Activated B cell treated with CpG ODN at 0.5 μM for 24 hours (primary cell): ENCODE measurements at regions of chr3 and their contacts with region 1.

Region 1: GRCh38 chr3:67171841-67172240 is 173.7 kb downstream of the KBTBD8 start:
- DNase-seq: no peak
- ATAC-seq: no peak
- H3K4me3 Mint-ChIP-seq: no peak overlapping the region
- H3K27ac Mint-ChIP-seq: no peak overlapping the region
- H3K4me1 Mint-ChIP-seq: no peaks in the 10 kb centered on the region
- H3K27me3 Mint-ChIP-seq: peaks cover 3% of the 10 kb centered on the region
- CTCF ChIP-seq: no peak

Region 2: DNA sequence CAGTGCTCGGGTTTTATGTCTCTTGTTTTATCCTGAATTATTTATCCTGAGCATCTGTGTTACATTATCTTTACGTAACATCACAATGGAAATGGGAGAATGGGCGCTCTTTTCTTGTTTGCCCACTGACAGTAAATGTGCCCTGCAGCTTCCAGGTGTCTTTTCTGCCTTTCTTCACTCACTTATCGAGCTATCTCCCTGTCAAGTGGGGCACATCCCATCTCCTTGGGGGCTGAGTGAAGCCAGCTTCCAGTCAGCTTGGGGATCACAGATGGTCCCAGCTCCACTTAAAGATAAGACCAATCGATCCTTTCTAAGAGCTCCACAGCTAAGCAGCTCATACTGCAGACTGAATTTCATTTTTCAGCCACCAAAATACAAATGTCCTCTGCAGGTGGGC is 47.9 kb before region 1 on chr3:
- CTCF ChIA-PET with region 1: no interaction called
- POLR2A ChIA-PET with region 1: interaction called, 11 read pairs
- intact Hi-C with region 1: no loop called
- DNase-seq: no peak
- ATAC-seq: no peak
- H3K4me3 Mint-ChIP-seq: no peak overlapping the region
- H3K27ac Mint-ChIP-seq: no peak overlapping the region
- H3K4me1 Mint-ChIP-seq: no peaks in the 10 kb centered on the region
- H3K27me3 Mint-ChIP-seq: no peaks in the 10 kb centered on the region
- CTCF ChIP-seq: no peak

Region 3: GRCh38 chr3:67198374-67198773 is 26.5 kb after region 1 on chr3:
- CTCF ChIA-PET with region 1: no interaction called
- POLR2A ChIA-PET with region 1: no interaction called
- intact Hi-C with region 1: no loop called
- DNase-seq: no peak
- ATAC-seq: no peak
- H3K4me3 Mint-ChIP-seq: no peak overlapping the region
- H3K27ac Mint-ChIP-seq: no peak overlapping the region
- H3K4me1 Mint-ChIP-seq: peaks cover 4% of the 10 kb centered on the region
- H3K27me3 Mint-ChIP-seq: no peaks in the 10 kb centered on the region
- CTCF ChIP-seq: no peak